Activated CD8-positive, alpha-beta T cell treated with anti-CD3 and anti-CD28 coated beads for 36 hours (primary cell): ENCODE measurements at regions of chr9 and their contacts with region 1.

Region 1: DNA sequence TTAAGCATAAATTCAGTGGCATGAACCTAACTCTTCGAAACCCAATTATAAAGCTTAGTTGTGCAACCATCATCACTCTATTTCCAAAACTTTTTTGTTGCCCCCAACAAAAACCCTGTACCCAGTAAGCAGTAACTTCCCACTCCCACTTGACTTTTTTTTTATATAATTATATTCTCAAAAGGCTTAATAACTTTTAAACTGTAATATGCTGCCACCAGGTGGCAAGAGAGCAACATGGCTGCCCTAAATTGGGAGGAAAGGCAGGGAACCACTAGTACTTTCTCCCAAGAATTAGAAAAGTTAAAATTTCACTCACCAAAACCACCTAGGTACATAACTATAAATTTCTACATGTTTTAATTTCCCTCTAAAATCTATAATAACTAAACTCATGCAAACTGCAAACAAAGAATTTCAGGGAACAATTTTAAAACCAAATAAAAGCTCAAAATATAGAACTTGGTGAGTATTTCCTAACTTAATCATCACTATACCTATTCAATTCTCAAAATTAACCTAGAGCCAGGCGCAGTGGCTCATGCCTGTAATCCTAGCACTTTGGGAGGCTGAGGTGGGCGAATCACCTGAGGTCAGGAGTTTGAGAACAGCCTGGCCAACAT is 50.2 kb upstream of the RNF38 start:
- DNase-seq: peak; percentile 21
- ATAC-seq: no peak
- H3K4me3 Mint-ChIP-seq: no peak overlapping the region
- H3K27ac Mint-ChIP-seq: no peak overlapping the region
- H3K4me1 Mint-ChIP-seq: peaks cover 15% of the 10 kb centered on the region
- H3K27me3 Mint-ChIP-seq: no peaks in the 10 kb centered on the region
- CTCF ChIP-seq: peak; percentile 80

Region 2: GRCh38 chr9:36436909-36437308 is 13.3 kb before region 1 on chr9:
- CTCF ChIA-PET with region 1: interaction called, 61 read pairs
- POLR2A ChIA-PET with region 1: interaction called, 4 read pairs
- intact Hi-C with region 1: no loop called
- DNase-seq: no peak
- ATAC-seq: no peak
- H3K4me3 Mint-ChIP-seq: no peak overlapping the region
- H3K27ac Mint-ChIP-seq: peak overlapping the region; percentile 53
- H3K4me1 Mint-ChIP-seq: peaks cover 33% of the 10 kb centered on the region
- H3K27me3 Mint-ChIP-seq: no peaks in the 10 kb centered on the region
- CTCF ChIP-seq: no peak

Region 3: DNA sequence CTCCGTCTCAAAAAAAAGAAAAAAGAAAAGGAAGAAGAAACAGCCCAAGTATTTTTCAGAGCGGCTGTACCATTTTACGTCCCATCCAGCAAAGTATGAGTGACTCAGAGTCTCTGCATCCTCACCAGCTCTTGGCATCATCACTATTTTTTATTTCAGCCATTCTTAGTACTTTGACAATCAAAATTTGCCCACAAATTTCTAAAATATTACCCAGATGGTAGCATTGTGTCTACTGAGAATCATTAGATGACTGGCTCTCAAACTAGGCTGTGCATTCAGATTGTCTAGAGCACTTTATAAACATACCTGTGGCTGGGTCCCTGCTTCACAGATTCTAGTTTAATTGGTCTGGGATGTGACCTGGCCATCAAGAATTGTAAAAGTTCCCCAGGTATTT is 100.9 kb after region 1 on chr9:
- CTCF ChIA-PET with region 1: interaction called, 47 read pairs
- POLR2A ChIA-PET with region 1: no interaction called
- intact Hi-C with region 1: loop called (anchors 5 kb)
- DNase-seq: no peak
- ATAC-seq: no peak
- H3K4me3 Mint-ChIP-seq: no peak overlapping the region
- H3K27ac Mint-ChIP-seq: no peak overlapping the region
- H3K4me1 Mint-ChIP-seq: peaks cover 1% of the 10 kb centered on the region
- H3K27me3 Mint-ChIP-seq: no peaks in the 10 kb centered on the region
- CTCF ChIP-seq: no peak

Region 4: GRCh38 chr9:36584622-36585470 is 134.6 kb after region 1 on chr9:
- CTCF ChIA-PET with region 1: no interaction called
- POLR2A ChIA-PET with region 1: no interaction called
- intact Hi-C with region 1: no loop called
- DNase-seq: no peak
- ATAC-seq: no peak
- H3K4me3 Mint-ChIP-seq: no peak overlapping the region
- H3K27ac Mint-ChIP-seq: no peak overlapping the region
- H3K4me1 Mint-ChIP-seq: no peaks in the 10 kb centered on the region
- H3K27me3 Mint-ChIP-seq: no peaks in the 10 kb centered on the region
- CTCF ChIP-seq: no peak